Activated T-helper 1 cell treated with anti-CD3 and anti-CD28 coated beads, Interleukin-12 subunit alpha, Interleukin-12 subunit beta, Interleukin-2, Interleukin-4 antibody, amounts not matched to agents 30 ng/mL and 10 ng/mL and 1 ng/mL, durations not matched to agents 14 hours and 24 hours and 36 hours (primary cell): ENCODE measurements at regions of chr3 and their contacts with region 1.

Region 1: DNA sequence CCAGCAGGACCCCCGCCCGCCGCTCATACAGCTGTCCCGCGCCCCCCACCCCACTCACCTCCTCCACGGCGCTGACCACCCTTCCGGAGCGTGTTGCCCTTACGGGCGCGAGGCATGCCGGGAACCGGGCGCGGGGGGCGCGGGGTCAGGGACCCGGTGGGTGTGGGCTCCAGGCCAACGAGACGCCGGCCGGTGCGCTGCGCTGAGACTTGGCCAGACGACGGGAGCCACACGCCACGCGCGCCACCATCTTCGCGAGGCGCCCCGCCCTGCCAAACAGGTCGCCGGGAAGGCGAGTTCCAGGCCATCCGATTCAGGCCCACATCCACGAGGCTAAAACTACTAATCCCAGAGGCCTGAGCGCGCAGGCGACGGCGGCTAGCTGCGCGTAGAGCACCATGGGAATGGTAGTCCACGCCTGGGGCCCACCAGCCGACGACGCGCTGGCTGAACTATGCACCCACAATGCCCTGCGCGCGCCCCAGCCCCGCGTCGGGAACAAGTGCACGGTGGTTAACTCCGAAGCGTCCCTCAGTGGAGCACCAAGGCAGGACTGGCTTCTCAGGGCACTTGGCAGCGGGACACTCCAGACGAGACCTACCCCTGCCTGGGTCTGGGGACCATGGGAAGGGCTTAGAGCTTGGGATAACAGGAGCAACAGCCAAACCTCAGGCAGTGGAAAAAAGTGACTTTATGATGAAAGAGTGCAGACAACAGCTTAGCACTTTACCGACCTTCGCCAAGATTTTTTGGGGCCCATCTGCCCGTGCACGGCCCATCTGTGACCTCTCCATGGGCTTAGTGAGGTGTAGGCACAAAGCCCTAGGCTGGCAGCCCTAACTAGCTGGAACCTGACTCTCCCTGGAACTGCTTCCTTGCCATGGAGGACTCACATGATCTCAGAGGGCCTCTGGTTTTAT is at the start of gene IFRD2:
- DNase-seq: peak; percentile 95
- H3K4me3 Mint-ChIP-seq: peak within 1 kb of the TSS; percentile 96
- H3K27ac Mint-ChIP-seq: peak within 1 kb of the TSS; percentile 83
- H3K4me1 Mint-ChIP-seq: peaks cover 14% of the 10 kb centered on the region
- H3K27me3 Mint-ChIP-seq: no peaks in the 10 kb centered on the region
- total RNA-seq, gene IFRD2: 215 TPM in 2 replicates

Region 2: DNA sequence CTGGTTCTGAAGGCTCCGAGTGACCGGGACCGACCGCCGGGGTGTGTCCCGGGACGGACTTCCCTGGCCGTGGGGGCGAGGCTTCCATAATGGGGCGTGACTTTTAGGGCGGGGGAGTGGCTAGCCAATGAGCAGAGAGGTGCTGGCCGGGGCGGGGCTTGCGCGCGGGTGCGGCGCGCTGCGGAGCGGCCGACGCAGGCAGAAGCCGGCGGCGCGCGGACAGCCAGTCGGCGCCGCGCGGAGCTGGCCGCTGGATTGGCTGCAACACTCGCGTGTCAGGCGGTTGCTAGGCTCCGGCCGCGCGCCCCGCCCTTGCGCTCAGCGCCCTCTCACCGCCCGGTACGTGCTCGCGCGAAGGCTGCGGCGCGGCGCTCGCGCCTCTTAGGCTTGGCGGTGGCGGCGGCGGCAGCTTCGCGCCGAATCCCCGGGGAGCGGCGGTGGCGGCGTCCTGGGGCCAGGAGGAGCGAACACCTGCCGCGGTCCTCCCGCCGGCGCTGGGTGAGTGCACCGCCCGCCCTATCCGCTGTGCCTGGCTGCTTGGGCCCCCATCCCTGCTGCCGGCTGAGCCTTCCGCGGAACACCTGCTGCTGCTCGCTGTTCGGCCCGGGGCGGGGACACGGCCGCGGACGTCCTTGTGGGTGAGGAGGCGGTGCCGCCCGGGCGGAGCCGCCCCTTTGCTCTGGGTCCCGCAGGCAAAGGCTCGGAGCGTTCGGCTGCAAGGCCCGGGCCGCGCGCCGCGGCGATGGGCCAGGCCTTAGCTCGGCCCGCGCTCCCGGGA is 822.3 kb before region 1 on chr3 and contains the start of gene DAG1:
- intact Hi-C with region 1: loop called (anchors 2 kb)
- DNase-seq: peak; percentile 96
- H3K4me3 Mint-ChIP-seq: peak within 1 kb of the TSS; percentile 92
- H3K27ac Mint-ChIP-seq: peak within 1 kb of the TSS; percentile 88
- H3K4me1 Mint-ChIP-seq: peaks cover 23% of the 10 kb centered on the region
- H3K27me3 Mint-ChIP-seq: no peaks in the 10 kb centered on the region
- total RNA-seq, gene DAG1: 20.5 and 23.7 TPM in 2 replicates

Region 3: GRCh38 chr3:50227390-50228183 is 64.8 kb before region 1 on chr3:
- intact Hi-C with region 1: loop called (anchors 1 kb)
- DNase-seq: peak; percentile 91
- H3K4me3 Mint-ChIP-seq: peak overlapping the region; percentile 90
- H3K27ac Mint-ChIP-seq: peak overlapping the region; percentile 90
- H3K4me1 Mint-ChIP-seq: peaks cover 34% of the 10 kb centered on the region
- H3K27me3 Mint-ChIP-seq: peaks cover 13% of the 10 kb centered on the region

Region 4: GRCh38 chr3:50260027-50260941 is 32.1 kb before region 1 on chr3:
- intact Hi-C with region 1: loop called (anchors 2 kb)
- DNase-seq: peak; percentile 86
- H3K4me3 Mint-ChIP-seq: peak overlapping the region; percentile 68
- H3K27ac Mint-ChIP-seq: peak overlapping the region; percentile 68
- H3K4me1 Mint-ChIP-seq: no peaks in the 10 kb centered on the region
- H3K27me3 Mint-ChIP-seq: peaks cover 1% of the 10 kb centered on the region

Region 5: GRCh38 chr3:50272911-50273693 is 19.3 kb before region 1 on chr3:
- intact Hi-C with region 1: no loop called
- DNase-seq: peak; percentile 82
- H3K4me3 Mint-ChIP-seq: peak overlapping the region; percentile 71
- H3K27ac Mint-ChIP-seq: no peak overlapping the region
- H3K4me1 Mint-ChIP-seq: peaks cover 21% of the 10 kb centered on the region
- H3K27me3 Mint-ChIP-seq: peaks cover 39% of the 10 kb centered on the region

Region 6: DNA sequence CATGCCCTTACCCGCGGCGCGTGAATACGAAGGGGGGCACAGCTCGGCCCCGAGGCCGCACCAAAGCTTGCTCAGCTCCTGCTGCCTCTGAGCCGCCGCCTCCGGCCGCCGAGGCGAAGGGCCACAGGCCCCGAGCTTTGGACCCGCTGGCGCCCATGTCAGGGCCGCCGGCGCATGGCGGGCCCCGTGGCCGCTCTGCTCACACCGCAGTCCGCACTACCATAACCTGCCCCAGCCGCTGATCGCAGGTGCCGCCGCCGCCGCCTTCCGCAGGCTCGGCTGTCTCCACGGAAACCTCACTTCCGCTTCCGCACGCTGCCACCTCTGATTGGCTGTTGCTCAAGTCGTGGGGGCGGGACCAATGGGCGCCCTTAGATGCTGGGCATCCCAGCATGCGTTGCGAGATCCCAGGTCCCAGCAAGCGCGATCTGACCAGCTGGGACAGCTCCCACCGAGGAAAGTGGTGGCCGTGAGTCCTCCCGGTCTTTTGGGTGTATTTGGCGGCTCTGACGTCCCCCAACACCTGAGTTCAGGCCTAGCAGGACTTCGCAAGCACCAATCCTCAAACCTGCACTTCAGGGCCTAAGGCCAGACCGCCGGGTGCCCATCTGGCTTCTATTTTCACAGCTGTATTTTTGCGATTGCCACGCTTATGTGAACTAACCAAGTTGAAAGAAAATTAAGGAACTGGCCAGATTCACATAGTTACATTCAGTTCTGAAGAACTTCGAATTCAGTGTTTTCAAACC is 35.7 kb after region 1 on chr3 and contains the start of gene TUSC2:
- intact Hi-C with region 1: loop called (anchors 1 kb)
- DNase-seq: peak; percentile 92
- H3K4me3 Mint-ChIP-seq: peak within 1 kb of the TSS; percentile 93
- H3K27ac Mint-ChIP-seq: peak within 1 kb of the TSS; percentile 88
- H3K4me1 Mint-ChIP-seq: peaks cover 25% of the 10 kb centered on the region
- H3K27me3 Mint-ChIP-seq: no peaks in the 10 kb centered on the region
- total RNA-seq, gene TUSC2: 27.9 and 29.9 TPM in 2 replicates

Region 7: GRCh38 chr3:50350527-50351322 is 58.3 kb after region 1 on chr3 and contains the starts of genes CYB561D2 and NPRL2:
- intact Hi-C with region 1: loop called (anchors 1 kb)
- DNase-seq: peak; percentile 100
- H3K4me3 Mint-ChIP-seq: peak within 1 kb of the TSS; percentile 95
- H3K27ac Mint-ChIP-seq: peak within 1 kb of the TSS; percentile 95
- H3K4me1 Mint-ChIP-seq: peaks cover 55% of the 10 kb centered on the region
- H3K27me3 Mint-ChIP-seq: no peaks in the 10 kb centered on the region
- total RNA-seq, gene CYB561D2: 30.0 and 35.9 TPM in 2 replicates
- total RNA-seq, gene NPRL2: 43.7 and 46.6 TPM in 2 replicates

Region 8: GRCh38 chr3:50415066-50415465 is 122.6 kb after region 1 on chr3:
- intact Hi-C with region 1: no loop called
- DNase-seq: no peak
- H3K4me3 Mint-ChIP-seq: no peak overlapping the region
- H3K27ac Mint-ChIP-seq: no peak overlapping the region
- H3K4me1 Mint-ChIP-seq: no peaks in the 10 kb centered on the region
- H3K27me3 Mint-ChIP-seq: peaks cover 6% of the 10 kb centered on the region